Right ventricle myocardium superior (tissue), 1 donor: ENCODE measurements at regions of chr11 and their contacts with region 1.

Region 1: GRCh38 chr11:44036811-44037657 is 10.7 kb upstream of the ACCSL start:
- DNase-seq: peak; percentile 89
- ATAC-seq: peak; percentile 93

Region 2: DNA sequence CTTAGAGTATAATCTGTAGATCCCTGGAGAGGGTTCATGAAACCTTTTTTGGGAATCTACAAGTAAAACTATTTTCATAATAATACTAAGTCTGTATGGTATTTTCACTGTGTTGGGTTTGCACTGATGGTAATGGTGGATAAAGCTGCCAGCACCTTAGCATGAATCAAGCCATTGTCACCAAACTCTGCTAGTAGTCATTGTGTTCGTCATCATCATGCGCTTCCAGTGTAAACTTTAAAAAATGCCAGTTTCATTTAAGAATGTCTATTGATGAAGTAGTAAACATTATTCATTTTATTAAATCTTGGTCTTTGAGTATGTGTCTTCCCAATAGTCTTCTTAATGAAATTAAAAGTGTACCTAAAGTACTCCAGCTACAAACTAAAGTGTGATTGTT is 141.4 kb before region 1 on chr11:
- intact Hi-C with region 1: loop called (anchors 2 kb)
- DNase-seq: no peak
- ATAC-seq: no peak

Region 3: GRCh38 chr11:43987384-43988039 is 49.5 kb before region 1 on chr11:
- intact Hi-C with region 1: loop called (anchors 10 kb)
- DNase-seq: peak; percentile 95
- ATAC-seq: peak; percentile 90

Region 4: DNA sequence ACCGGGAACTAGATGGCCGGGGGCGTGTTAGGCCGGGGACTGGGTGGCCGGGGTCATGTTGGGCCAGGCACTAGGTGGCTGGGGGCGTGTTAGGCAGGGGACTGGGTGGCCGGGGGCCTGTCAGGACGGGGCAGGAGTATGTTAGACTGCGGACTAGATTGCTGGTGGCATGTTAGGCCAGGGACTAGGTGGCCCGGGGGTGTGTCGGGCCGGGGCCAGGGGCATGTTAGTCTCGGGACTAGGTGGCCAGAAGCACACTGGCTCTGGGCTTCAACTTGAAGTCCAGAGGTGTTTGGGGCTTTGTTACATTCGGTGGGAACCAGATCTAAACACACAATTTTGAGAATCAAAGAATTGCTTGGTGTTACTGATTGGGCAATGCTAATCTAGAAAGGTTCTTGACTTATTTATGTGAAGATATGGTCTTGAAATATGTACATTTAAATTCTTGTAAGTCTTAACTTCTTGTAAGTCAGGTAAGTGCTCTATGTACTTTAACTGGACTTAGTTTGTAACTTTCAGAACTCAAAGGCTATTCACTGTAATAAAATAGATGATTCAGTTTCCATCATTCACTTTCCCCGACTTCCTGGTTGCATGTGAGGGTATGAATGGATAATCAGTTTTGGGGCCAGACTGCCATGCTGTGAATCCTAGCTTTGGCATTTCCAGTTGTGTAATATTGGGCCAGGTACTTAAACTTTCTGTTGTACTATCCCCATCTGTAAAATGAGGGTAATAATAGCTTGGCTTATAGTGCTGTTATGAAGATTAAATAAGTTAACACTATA is 59.6 kb after region 1 on chr11:
- intact Hi-C with region 1: no loop called
- DNase-seq: no peak
- ATAC-seq: peak; percentile 1